ENCODE measurements at regions of chr4 and their contacts with region 1.

Region 1: GRCh38 chr4:173752610-173753230 is 222.7 kb upstream of the HAND2 start:
- DNase-seq: no peak
- ATAC-seq: no peak

Region 2: GRCh38 chr4:173420324-173420752 is 332.4 kb before region 1 on chr4:
- intact Hi-C with region 1: loop called (anchors 10 kb)
- DNase-seq: no peak
- ATAC-seq: no peak

Region 3: DNA sequence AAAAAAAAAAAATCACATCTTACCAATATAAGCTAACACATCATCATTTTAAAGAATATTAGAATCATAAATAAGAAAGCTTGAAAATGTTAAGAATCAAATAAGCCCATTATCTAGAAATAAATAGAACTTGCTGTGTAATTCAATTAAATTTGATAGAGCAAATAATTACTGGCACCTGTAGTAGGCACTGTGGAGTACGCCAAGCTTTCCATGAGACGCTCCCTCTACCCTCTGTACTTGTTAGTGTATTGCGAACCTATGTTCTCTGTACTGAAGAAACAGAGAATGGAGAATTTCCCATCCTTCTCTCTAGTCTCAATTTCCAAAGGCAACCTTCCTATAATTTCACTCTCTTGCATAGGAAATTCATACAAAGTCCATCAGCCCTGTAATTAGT is 161.0 kb before region 1 on chr4:
- intact Hi-C with region 1: loop called (anchors 5 kb)
- DNase-seq: no peak
- ATAC-seq: no peak

Region 4: GRCh38 chr4:173682609-173683008 is 70.1 kb before region 1 on chr4:
- intact Hi-C with region 1: loop called (anchors 5 kb)
- DNase-seq: no peak
- ATAC-seq: no peak

Region 5: GRCh38 chr4:174156239-174156826 is 403.6 kb after region 1 on chr4:
- intact Hi-C with region 1: loop called (anchors 10 kb)
- DNase-seq: no peak
- ATAC-seq: peak; percentile 73

Measured in Right ventricle myocardium inferior (tissue), 1 donor.